Mammary epithelial cell (primary cell): ENCODE measurements at regions of chr4 and their contacts with region 1.

Region 1: GRCh38 chr4:145609481-145610427 is 9.4 kb upstream of the MMAA start:
- DNase-seq: peak; percentile 46
- H3K4me3 ChIP-seq: no peak overlapping the region
- H3K27ac ChIP-seq: no peak overlapping the region
- H3K4me1 ChIP-seq: no peaks in the 10 kb centered on the region
- H3K27me3 ChIP-seq: no peaks in the 10 kb centered on the region
- CTCF ChIP-seq: peak; percentile 81 to 84

Region 2: DNA sequence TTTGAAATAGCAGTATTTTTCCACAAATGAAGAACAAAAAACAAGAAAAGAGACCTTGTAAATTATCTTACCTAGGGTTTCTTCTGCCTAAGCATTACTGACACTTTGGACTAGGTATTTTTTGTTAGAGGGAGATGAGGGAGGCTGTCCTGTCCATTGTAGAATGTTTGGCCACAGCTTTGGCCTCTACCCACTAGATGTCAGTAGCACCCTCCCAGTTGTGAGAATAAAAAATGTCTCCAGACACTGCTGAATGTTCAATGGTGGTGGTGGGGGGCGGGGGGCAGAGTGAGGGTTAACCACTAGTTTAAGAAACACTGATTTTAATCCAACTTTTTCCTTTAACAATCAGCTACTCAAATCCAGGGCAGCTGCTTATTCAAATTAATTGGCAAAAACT is 455.2 kb before region 1 on chr4:
- CTCF ChIA-PET with region 1: no interaction called
- dilution Hi-C with region 1: no loop called
- in situ Hi-C with region 1: no loop called
- intact Hi-C with region 1: loop called (anchors 1 kb)
- DNase-seq: peak; percentile 8
- H3K4me3 ChIP-seq: no peak overlapping the region
- H3K27ac ChIP-seq: no peak overlapping the region
- H3K4me1 ChIP-seq: no peaks in the 10 kb centered on the region
- H3K27me3 ChIP-seq: no peaks in the 10 kb centered on the region
- CTCF ChIP-seq: peak; percentile 28 to 51

Region 3: DNA sequence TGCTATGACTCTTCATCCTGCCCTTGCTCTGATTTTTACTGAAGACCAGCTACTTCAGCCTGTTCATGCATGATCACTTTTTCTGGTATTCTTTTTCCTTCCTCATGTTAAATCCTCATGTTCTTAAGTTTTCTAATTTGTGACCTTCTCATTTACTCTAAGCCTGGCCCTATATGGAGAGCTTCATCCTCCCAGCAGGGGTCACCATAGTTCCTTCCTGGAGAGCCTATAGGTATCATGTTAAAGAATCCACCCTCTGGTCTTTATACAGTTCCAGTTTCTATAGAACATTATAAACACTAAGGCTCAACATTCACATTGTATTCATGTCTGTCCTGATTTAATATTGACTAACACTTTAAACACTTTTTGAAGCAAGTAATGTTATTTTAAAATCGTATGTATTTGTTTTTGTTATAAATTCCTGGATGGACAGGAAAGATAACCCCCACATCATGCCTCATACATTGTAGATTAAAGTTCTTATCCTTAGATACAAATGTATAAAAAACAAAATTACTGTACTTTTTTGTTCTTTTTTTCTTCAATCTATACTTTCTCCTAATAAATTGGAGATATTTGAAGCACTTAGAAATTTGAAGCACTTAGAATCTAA is 375.6 kb before region 1 on chr4:
- CTCF ChIA-PET with region 1: interaction called, 6 read pairs
- dilution Hi-C with region 1: loop called (anchors 25 kb)
- in situ Hi-C with region 1: loop called (anchors 5 to 10 kb)
- intact Hi-C with region 1: loop called (anchors 1 kb)
- DNase-seq: peak; percentile 43
- H3K4me3 ChIP-seq: no peak overlapping the region
- H3K27ac ChIP-seq: no peak overlapping the region
- H3K4me1 ChIP-seq: no peaks in the 10 kb centered on the region
- H3K27me3 ChIP-seq: no peaks in the 10 kb centered on the region
- CTCF ChIP-seq: peak; percentile 94 to 95

Region 4: GRCh38 chr4:145557720-145558119 is 52.0 kb before region 1 on chr4:
- CTCF ChIA-PET with region 1: no interaction called
- dilution Hi-C with region 1: no loop called
- in situ Hi-C with region 1: no loop called
- intact Hi-C with region 1: loop called (anchors 1 kb)
- DNase-seq: peak; percentile 75
- H3K4me3 ChIP-seq: no peak overlapping the region
- H3K27ac ChIP-seq: peak overlapping the region; percentile 42
- H3K4me1 ChIP-seq: peaks cover 5% of the 10 kb centered on the region
- H3K27me3 ChIP-seq: no peaks in the 10 kb centered on the region
- CTCF ChIP-seq: peak; percentile 97 to 99